ENCODE measurements at regions of chr11 and their contacts with region 1.

Region 1: GRCh38 chr11:31810779-31811647 is at the start of gene PAX6:
- DNase-seq: peak; percentile 14
- H3K4me3 Mint-ChIP-seq: peak within 1 kb of the TSS; percentile 61
- H3K27ac Mint-ChIP-seq: peak within 1 kb of the TSS; percentile 67
- H3K4me1 Mint-ChIP-seq: peaks cover 37% of the 10 kb centered on the region
- H3K27me3 Mint-ChIP-seq: peaks cover 80% of the 10 kb centered on the region
- total RNA-seq, gene PAX6: not detected in 2 replicates

Region 2: GRCh38 chr11:31798554-31799434 is 12.2 kb before region 1 on chr11:
- intact Hi-C with region 1: loop called (anchors 1 kb)
- DNase-seq: no peak
- H3K4me3 Mint-ChIP-seq: no peak overlapping the region
- H3K27ac Mint-ChIP-seq: no peak overlapping the region
- H3K4me1 Mint-ChIP-seq: peaks cover 8% of the 10 kb centered on the region
- H3K27me3 Mint-ChIP-seq: peaks cover 70% of the 10 kb centered on the region

Region 3: GRCh38 chr11:31826536-31827438 is 15.8 kb after region 1 on chr11:
- intact Hi-C with region 1: loop called (anchors 1 kb)
- DNase-seq: no peak
- H3K4me3 Mint-ChIP-seq: peak overlapping the region; percentile 1
- H3K27ac Mint-ChIP-seq: peak overlapping the region; percentile 62
- H3K4me1 Mint-ChIP-seq: peaks cover 7% of the 10 kb centered on the region
- H3K27me3 Mint-ChIP-seq: peaks cover 75% of the 10 kb centered on the region

Region 4: DNA sequence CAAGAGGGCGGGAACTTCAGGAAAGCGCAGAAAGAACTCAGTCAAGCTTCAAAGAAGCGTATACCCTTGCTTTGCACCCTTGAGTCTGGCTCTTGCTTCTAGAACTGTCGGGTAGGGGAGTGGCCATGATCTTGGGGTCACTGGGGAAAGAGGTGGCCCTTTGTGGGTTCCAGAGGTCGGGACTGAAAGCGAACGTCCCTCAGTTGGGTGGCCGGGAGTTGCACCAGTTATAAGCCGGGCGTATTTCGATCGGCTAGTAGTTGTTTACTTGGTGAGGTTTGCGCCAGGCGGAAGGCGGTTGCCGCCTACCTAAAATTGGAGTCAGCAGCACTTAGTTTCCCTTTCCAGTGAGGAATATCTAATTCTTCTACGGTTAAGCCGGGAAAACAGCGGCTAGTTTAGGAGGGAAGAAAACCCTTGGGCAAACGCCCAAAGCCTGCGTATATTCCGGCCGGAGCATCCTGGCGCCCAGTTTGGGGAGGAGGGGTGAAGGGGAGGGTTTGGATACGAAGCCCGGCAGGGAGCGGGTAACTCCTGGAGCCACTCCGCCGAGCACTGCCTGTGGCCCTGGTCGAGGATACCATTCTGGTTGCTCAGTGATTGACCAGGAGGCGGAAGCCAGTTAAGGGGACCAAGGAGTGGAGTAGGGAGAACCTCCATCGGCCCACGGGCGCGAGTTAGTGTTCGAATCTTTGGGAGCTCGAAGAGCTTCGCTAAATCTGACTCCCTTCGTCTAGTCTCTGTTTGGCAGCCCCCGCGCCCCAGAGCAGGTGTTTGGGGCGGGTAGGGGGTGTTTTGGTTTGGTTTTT is 625.1 kb after region 1 on chr11:
- intact Hi-C with region 1: loop called (anchors 2 kb)
- DNase-seq: no peak
- H3K4me3 Mint-ChIP-seq: no peak overlapping the region
- H3K27ac Mint-ChIP-seq: peak overlapping the region; percentile 61
- H3K4me1 Mint-ChIP-seq: peaks cover 5% of the 10 kb centered on the region
- H3K27me3 Mint-ChIP-seq: peaks cover 73% of the 10 kb centered on the region